Activated naive CD4-positive, alpha-beta T cell treated with anti-CD3 and anti-CD28 coated beads for 36 hours (primary cell): ENCODE measurements at regions of chr2 and their contacts with region 1.

Region 1: DNA sequence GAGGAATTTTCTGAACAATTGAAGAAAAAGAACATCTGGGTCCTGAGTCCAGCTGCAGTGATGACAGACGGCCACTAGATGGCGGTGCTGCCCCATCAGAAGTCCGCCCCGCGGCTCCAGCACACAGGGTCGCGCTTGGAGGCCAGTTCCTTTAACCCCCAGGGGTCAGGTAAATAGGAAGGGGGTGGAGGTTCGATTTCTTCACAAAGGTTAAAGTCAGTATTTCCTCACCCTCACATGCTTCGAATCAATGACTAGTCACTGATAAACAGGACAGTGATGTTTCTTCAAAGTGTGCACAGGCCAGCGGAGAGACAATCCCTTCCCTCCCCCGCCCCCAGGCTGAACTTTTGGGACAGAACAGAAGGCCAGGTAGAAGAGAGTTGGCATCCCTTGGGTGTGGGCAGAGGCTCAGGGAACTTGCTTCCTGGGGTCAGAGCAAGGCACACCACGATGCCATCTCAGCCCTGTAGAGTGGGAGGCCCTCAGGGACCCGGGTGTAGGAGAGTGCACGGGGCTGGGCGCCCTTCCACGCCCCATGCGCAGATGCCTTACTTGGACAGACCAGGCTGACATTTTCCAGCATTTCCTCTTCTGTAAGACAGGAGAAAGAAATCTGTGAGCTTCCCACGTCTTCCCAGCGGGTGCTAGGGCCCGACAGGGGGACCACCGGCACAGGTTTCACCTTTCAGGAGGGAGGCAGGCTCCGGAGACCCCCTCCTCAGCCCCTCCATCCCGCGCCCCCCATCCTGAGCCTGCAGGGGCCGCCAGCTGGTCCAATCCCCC is 722 bp downstream of the APOB start:
- DNase-seq: peak; percentile 67
- H3K4me3 Mint-ChIP-seq: no peak overlapping the region
- H3K27ac Mint-ChIP-seq: no peak overlapping the region
- H3K4me1 Mint-ChIP-seq: peaks cover 4% of the 10 kb centered on the region
- H3K27me3 Mint-ChIP-seq: peaks cover 21% of the 10 kb centered on the region

Region 2: DNA sequence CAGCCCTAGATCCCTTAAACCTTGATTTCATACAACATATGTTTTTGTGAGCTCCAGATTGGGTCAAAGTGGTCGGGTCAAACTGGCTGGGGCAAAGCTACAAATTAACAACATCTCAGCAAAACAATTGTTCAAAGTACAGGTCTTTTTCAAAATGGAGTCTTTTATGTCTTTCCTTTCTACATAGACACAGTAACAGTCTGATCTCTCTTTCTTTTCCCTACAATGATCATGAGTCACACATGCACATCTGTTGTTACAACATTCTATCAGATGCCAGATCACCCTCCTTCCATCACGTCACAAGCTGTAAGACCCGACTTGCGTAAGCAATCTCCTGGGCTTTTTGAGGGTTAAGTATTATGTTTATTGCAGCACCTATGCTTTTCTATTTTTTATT is 541.2 kb before region 1 on chr2:
- CTCF ChIA-PET with region 1: no interaction called
- intact Hi-C with region 1: loop called (anchors 5 kb)
- DNase-seq: no peak
- H3K4me3 Mint-ChIP-seq: no peak overlapping the region
- H3K27ac Mint-ChIP-seq: no peak overlapping the region
- H3K4me1 Mint-ChIP-seq: peaks cover 4% of the 10 kb centered on the region
- H3K27me3 Mint-ChIP-seq: peaks cover 4% of the 10 kb centered on the region

Region 3: DNA sequence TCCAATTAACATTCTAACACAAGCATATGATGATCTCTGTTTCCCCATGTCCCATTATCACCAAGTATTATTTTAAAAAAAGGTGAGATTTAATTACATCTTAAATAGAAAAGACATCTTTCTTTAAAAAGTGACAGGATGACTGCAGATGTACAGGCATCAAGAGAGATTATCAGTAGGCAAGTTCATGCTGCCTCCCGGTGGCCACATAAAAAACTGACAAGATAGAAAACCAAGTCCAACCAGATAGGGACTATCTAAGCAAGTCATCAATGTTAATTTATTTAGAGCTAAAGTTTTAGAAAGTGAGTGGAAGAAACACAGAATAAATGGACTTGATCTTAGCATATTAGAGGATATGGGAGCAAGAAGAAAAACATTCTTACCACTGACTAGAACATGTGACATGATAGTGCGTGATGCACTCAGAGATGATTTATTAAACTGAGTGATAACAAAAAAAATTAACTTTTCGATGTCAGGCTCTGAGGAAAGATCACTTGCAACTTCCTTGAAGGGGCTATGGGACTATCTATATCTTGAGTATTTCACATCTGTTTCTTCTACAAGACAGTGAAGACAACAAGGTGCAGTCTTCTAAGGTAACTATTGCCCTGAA is 75.3 kb after region 1 on chr2:
- CTCF ChIA-PET with region 1: interaction called, 13 read pairs
- intact Hi-C with region 1: loop called (anchors 1 kb)
- DNase-seq: peak; percentile 41
- H3K4me3 Mint-ChIP-seq: no peak overlapping the region
- H3K27ac Mint-ChIP-seq: no peak overlapping the region
- H3K4me1 Mint-ChIP-seq: no peaks in the 10 kb centered on the region
- H3K27me3 Mint-ChIP-seq: peaks cover 8% of the 10 kb centered on the region

Region 4: GRCh38 chr2:21317131-21317530 is 274.0 kb after region 1 on chr2:
- CTCF ChIA-PET with region 1: interaction called, 4 read pairs
- intact Hi-C with region 1: loop called (anchors 1 kb)
- DNase-seq: peak; percentile 43
- H3K4me3 Mint-ChIP-seq: no peak overlapping the region
- H3K27ac Mint-ChIP-seq: no peak overlapping the region
- H3K4me1 Mint-ChIP-seq: no peaks in the 10 kb centered on the region
- H3K27me3 Mint-ChIP-seq: no peaks in the 10 kb centered on the region